ENCODE measurements at regions of chr14 and their contacts with region 1.

Region 1: DNA sequence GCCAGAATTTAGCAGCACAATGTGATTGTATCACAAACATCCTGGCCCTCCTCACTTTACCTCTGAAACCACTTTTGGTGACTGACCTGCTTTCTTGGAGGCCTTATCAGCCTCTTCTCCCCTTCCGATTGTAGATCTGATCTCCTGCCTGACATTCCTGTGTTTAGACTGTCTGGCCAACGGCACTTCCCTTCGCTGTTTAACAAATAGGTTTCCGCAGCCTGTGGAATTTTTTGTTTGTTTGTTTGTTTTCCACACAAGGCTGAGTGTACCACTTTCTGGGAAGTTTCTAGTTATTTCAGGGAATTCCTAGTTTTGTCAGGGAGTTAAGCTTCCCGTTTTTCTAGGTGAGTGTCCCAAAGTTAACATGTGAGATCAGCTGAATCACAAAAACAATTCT is 65.9 kb upstream of the CDKN3 start:
- DNase-seq: no peak
- ATAC-seq: no peak
- H3K4me3 ChIP-seq: no peak overlapping the region
- H3K27ac ChIP-seq: no peak overlapping the region
- H3K4me1 ChIP-seq: no peaks in the 10 kb centered on the region
- H3K27me3 ChIP-seq: peaks cover 0 to 5% (median 0%) of the 10 kb centered on the region in 4 donors
- CTCF ChIP-seq: no peak

Region 2: GRCh38 chr14:53533384-53533970 is 797.4 kb before region 1 on chr14:
- intact Hi-C with region 1: loop called in 1 of 3 experiments (anchors 5 kb)
- DNase-seq: no peak
- ATAC-seq: no peak
- H3K4me3 ChIP-seq: no peak overlapping the region
- H3K27ac ChIP-seq: no peak overlapping the region
- H3K4me1 ChIP-seq: no peaks in the 10 kb centered on the region
- H3K27me3 ChIP-seq: no peaks in the 10 kb centered on the region
- CTCF ChIP-seq: no peak

Region 3: DNA sequence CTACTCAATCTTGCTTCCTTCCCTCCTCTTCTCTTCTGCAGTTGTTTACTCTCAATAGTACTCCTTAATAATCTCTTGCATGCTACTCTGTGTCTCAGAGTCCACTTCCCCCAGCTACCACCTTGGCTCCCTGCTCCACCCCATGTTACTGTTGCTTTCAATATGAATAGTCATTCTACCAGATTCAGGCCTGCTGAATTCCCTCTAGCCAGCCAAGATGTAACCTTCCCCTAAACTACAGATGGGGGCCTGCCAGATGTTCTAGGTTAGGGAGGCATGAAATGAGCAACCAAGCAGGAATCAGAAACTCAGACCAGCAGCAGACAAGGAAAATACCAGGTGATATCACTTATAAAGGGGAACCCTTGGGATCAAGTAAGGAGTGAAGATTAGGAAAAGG is 785.7 kb before region 1 on chr14:
- intact Hi-C with region 1: no loop called
- DNase-seq: no peak
- ATAC-seq: no peak
- H3K4me3 ChIP-seq: no peak overlapping the region
- H3K27ac ChIP-seq: no peak overlapping the region
- H3K4me1 ChIP-seq: no peaks in the 10 kb centered on the region
- H3K27me3 ChIP-seq: no peaks in the 10 kb centered on the region
- CTCF ChIP-seq: no peak

Measured in pancreas (tissue), 10 donors.